Dendritic cell treated with granulocyte-macrophage colony-stimulating factor and Interleukin-4, amounts not matched to agents 40 ng/mL and 50 ng/mL, for 4 days (primary cell): ENCODE measurements at regions of chr18 and their contacts with region 1.

Region 1: GRCh38 chr18:5568416-5568815 is 24.6 kb upstream of the EPB41L3 start:
- H3K4me3 Mint-ChIP-seq: no peak overlapping the region
- H3K27ac Mint-ChIP-seq: no peak overlapping the region
- H3K4me1 Mint-ChIP-seq: peaks cover 6% of the 10 kb centered on the region
- H3K27me3 Mint-ChIP-seq: peaks cover 21% of the 10 kb centered on the region

Region 2: GRCh38 chr18:5628512-5629255 is 60.3 kb after region 1 on chr18:
- intact Hi-C with region 1: loop called (anchors 10 kb)
- H3K4me3 Mint-ChIP-seq: peak overlapping the region; percentile 79
- H3K27ac Mint-ChIP-seq: peak overlapping the region; percentile 53
- H3K4me1 Mint-ChIP-seq: peaks cover 5% of the 10 kb centered on the region
- H3K27me3 Mint-ChIP-seq: peaks cover 45% of the 10 kb centered on the region